Left ventricle myocardium inferior (tissue), 1 donor: ENCODE measurements at regions of chr10 and their contacts with region 1.

Region 1: DNA sequence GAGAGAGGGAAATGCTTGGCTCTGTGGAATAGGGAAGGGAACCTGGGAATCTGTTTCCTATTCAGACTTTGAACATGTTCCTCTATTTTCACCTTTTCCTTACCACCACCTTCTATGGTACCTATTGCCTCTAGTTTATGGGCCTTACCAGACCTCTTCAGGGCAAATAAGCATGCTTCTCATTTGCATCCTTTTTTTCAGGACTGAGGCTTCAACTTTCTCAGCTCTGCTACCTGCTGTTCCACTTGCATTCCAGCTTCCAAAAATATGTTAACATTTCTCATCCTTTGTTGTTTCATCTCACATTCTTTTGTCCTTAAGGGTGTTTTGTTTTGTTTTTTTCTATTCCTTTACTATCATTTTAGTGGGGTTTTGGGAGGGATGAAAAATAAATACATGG is 77.9 kb upstream of the MXI1 start:
- DNase-seq: no peak
- H3K4me3 ChIP-seq: no peak overlapping the region
- H3K27ac ChIP-seq: no peak overlapping the region
- H3K4me1 ChIP-seq: no peaks in the 10 kb centered on the region
- H3K27me3 ChIP-seq: no peaks in the 10 kb centered on the region
- CTCF ChIP-seq: no peak

Region 2: DNA sequence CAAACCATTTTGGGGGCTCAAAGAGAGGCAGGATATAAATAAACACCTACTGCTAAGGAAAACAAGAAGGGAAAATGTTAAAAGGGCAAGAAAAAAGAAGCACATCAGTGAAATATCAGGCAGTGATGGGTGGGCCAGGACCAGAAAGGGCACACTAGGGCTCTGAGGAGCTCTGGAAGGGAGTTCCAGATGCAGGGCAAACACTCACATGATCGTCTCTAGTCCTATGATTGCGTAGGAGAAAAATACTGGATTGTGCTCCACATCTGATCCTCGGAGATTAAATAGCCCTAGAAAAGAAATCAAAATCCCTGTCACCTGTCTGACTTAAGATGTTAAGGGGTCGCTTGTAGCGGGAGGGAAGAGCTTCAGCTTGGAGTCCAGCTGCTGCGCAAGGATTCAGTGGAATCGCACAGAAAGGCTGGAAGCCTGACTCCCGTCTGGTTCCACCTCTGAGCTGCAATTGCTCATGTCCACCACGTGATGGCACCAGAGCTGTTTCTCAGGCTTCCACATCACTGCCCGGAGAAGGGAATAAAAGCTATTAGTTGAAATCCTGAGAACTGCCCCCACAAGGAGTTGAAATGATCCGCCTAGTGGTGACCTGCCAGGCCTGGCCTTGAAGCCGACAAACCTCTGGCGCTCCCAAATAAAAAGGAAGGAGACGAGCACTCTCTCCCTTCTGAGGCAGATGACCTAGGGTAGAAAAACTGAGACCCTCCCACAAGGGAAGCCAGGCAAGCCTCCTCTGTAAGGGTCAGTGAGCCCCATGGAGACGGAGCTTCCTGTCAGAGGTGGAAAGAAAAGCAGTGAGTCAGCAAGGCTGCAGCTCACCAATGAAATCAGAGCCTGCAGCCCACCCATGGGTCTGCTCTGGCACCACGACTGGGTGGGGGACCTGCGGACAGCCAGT is 245.4 kb before region 1 on chr10:
- intact Hi-C with region 1: loop called (anchors 10 kb)
- DNase-seq: peak; percentile 65
- H3K4me3 ChIP-seq: peak overlapping the region; percentile 31
- H3K27ac ChIP-seq: peak overlapping the region; percentile 71
- H3K4me1 ChIP-seq: peaks cover 44% of the 10 kb centered on the region
- H3K27me3 ChIP-seq: no peaks in the 10 kb centered on the region
- CTCF ChIP-seq: peak; percentile 100